IMR-90 (cell line): ENCODE measurements at regions of chr21 and their contacts with region 1.

Region 1: DNA sequence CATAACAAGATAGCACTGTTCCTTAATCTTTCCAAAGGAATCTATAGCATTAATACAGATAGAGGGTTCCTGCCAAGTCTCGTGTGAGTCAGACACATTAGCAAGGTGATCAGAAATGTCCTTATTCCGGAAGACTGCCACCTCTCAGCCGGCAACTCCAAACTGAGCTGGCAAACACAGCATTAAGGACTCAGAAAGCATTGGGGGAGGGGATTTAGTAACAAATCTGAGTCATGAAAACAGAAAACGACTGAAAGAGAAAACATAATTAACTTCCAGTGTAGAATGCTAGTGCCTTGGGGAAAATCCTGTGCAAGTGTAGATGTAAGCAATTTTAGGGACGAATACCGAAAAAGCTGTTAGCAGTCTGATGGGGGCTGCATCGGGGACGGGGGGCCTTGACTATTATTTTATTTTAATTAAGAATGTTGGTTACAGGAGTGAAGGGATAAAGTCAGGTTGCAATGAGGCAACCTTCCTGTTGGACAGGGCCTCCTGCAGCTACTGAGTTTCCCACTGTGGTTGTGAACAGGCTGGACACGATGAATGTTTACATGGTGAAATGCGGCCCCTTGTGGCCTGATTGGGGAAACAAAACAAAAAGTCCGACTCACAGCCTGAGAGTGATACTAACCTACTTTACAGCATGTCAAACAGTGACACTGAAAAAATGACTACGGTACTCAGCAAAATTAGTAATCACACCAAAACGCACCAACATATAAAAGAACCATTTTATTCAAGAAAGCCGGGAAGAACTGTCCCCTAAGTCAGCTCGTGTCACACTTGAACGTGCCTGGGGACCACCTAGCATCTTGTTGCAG is 20.7 kb downstream of the MIS18A start:
- DNase-seq: peak; percentile 85
- ATAC-seq: peak; percentile 85
- H3K4me3 ChIP-seq: no peak overlapping the region
- H3K27ac ChIP-seq: no peak overlapping the region
- H3K4me1 ChIP-seq: peaks cover 8% of the 10 kb centered on the region; the same call in 1 of the 2 replicates
- H3K27me3 ChIP-seq: no peaks in the 10 kb centered on the region
- CTCF ChIP-seq: peak; percentile 93
- POLR2A ChIP-seq: no peak
- RAD21 ChIP-seq: peak; percentile 96

Region 2: DNA sequence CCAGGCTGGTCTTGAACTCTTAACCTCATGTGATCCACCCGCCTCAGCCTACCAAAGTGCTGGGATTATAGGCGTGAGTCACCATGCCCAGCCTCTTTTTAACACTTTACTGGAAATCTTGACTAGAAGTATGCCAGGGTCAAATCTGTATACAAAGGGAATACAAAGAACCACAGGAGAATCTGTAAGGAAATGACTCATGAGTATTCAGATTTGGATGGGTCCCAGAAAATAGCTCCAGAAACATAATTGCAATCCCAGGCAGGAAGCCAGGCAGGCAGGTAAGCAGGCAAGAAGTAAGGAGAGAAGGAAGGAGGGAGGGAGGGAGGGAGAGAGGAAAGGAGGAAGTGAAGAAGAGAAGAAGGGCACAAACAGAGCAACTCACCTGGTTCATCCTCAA is 891.3 kb before region 1 on chr21:
- CTCF ChIA-PET with region 1: no interaction called
- POLR2A ChIA-PET with region 1: interaction called, 14 read pairs
- dilution Hi-C with region 1: no loop called
- in situ Hi-C with region 1: no loop called
- intact Hi-C with region 1: no loop called
- DNase-seq: peak; percentile 86
- ATAC-seq: 0 out of 2 replicates have a peak, but pooled peaks have one; percentile 29
- H3K4me3 ChIP-seq: no peak overlapping the region
- H3K27ac ChIP-seq: no peak overlapping the region
- H3K4me1 ChIP-seq: peaks cover 2% of the 10 kb centered on the region; the same call in 1 of the 2 replicates
- H3K27me3 ChIP-seq: peaks cover 2% of the 10 kb centered on the region
- CTCF ChIP-seq: no peak
- POLR2A ChIP-seq: no peak
- RAD21 ChIP-seq: no peak

Region 3: GRCh38 chr21:31786164-31786920 is 471.8 kb before region 1 on chr21:
- CTCF ChIA-PET with region 1: interaction called, 13 read pairs
- POLR2A ChIA-PET with region 1: no interaction called
- dilution Hi-C with region 1: no loop called
- in situ Hi-C with region 1: loop called (anchors 5 kb)
- intact Hi-C with region 1: loop called (anchors 1 kb)
- DNase-seq: no peak
- ATAC-seq: no peak
- H3K4me3 ChIP-seq: no peak overlapping the region
- H3K27ac ChIP-seq: no peak overlapping the region
- H3K4me1 ChIP-seq: no peaks in the 10 kb centered on the region
- H3K27me3 ChIP-seq: peaks cover 3% of the 10 kb centered on the region; the same call in 1 of the 2 replicates
- CTCF ChIP-seq: no peak
- POLR2A ChIP-seq: no peak
- RAD21 ChIP-seq: no peak

Region 4: DNA sequence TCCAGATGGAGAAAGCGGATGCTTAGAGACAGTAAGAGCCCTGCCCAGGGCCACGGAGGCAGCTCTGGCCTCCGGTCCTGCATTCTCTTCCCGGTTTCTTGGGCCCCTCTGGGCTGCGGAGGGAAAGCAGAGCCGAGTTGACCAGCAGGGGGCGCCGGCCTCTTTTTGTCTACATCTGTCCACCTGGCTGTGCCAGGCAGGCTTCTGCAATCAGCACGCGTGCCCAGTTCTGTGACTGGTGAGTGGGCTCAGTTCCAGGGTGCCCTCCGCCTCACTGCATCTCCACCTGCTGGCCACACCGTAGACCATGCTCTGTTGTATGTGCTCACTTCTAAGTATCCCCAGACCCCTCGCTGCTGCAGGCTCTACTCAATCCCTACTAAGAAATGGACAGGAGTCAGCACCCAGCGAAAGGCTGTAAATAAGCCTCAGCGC is 392.1 kb before region 1 on chr21:
- CTCF ChIA-PET with region 1: interaction called, 8 read pairs
- POLR2A ChIA-PET with region 1: no interaction called
- dilution Hi-C with region 1: no loop called
- in situ Hi-C with region 1: loop called (anchors 5 kb)
- intact Hi-C with region 1: loop called (anchors 1 kb)
- DNase-seq: peak; percentile 62
- ATAC-seq: peak; percentile 98
- H3K4me3 ChIP-seq: no peak overlapping the region
- H3K27ac ChIP-seq: no peak overlapping the region
- H3K4me1 ChIP-seq: no peaks in the 10 kb centered on the region
- H3K27me3 ChIP-seq: peaks cover 18% of the 10 kb centered on the region
- CTCF ChIP-seq: peak; percentile 84
- POLR2A ChIP-seq: no peak
- RAD21 ChIP-seq: peak; percentile 81

Region 5: GRCh38 chr21:31945546-31945945 is 312.6 kb before region 1 on chr21:
- CTCF ChIA-PET with region 1: interaction called, 3 read pairs
- POLR2A ChIA-PET with region 1: no interaction called
- dilution Hi-C with region 1: no loop called
- in situ Hi-C with region 1: no loop called
- intact Hi-C with region 1: loop called (anchors 5 kb)
- DNase-seq: peak; percentile 97
- ATAC-seq: peak; percentile 94
- H3K4me3 ChIP-seq: no peak overlapping the region
- H3K27ac ChIP-seq: peak overlapping the region; percentile 39; the same call in 1 of the 2 replicates
- H3K4me1 ChIP-seq: peaks cover 14% of the 10 kb centered on the region
- H3K27me3 ChIP-seq: no peaks in the 10 kb centered on the region
- CTCF ChIP-seq: no peak
- POLR2A ChIP-seq: no peak
- RAD21 ChIP-seq: peak; percentile 17; the same call in 1 of the 2 replicates

Region 6: DNA sequence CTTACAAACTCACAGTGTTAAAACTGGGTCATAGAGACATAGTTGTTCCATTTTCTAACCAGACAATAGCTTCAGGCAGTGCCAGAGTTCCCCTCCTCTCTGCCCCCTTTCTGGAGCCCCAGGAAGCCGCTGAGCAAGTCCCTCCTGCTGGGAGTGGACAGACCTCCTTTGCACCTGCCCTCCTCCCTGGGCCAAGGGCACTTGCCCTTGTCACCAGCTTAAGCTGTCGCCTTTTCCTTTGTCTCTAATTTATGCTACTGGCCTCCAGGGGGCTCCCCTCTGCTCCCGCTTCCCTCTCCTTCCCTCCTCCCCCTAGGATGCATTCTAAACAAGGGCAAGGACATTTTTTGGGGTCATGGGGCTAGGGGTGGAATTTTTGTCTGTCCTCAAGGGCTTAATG is 161.8 kb before region 1 on chr21:
- CTCF ChIA-PET with region 1: no interaction called
- POLR2A ChIA-PET with region 1: no interaction called
- dilution Hi-C with region 1: no loop called
- in situ Hi-C with region 1: no loop called
- intact Hi-C with region 1: loop called (anchors 1 kb)
- DNase-seq: no peak
- ATAC-seq: no peak
- H3K4me3 ChIP-seq: no peak overlapping the region
- H3K27ac ChIP-seq: no peak overlapping the region
- H3K4me1 ChIP-seq: no peaks in the 10 kb centered on the region
- H3K27me3 ChIP-seq: peaks cover 5% of the 10 kb centered on the region
- CTCF ChIP-seq: peak; percentile 26; the same call in 1 of the 2 replicates
- POLR2A ChIP-seq: no peak
- RAD21 ChIP-seq: no peak